CD8-positive, alpha-beta T cell (primary cell): ENCODE measurements at regions of chr5 and their contacts with region 1.

Region 1: DNA sequence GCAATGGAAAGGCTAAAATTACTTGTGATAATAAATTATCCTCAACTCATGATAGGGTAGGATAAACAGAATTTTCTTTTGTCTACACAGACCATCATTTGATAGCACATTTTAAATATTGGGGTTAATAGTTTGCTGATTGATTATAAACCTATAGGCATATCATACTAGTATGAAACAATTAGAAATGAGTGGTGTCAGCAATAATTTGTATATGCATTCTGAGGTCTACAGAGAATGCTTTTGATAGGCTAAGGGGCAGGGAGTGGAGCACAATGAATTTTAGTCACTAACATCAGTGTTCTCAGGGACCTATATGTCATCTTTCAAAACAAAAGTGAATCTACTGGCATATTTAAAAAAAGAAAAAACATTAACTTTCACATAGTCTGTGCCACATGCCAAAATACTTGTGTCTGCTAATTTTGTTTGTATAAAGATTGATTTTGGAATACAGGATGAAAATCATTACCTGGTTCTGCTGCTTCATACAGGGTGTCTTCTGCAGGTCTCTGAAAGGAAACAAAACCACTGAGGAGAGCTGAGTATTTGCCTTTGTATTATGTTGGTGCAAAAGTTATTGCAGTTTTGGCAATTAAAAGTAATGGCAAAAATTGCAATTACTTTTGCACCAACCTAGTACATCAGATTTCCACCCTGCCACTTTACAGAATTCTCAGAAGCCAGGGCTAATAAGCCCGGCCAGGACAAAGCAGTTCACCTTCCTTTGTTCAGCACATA is 27.9 kb upstream of the NADK2 start:
- DNase-seq: no peak
- ATAC-seq: no peak
- H3K4me3 ChIP-seq: no peak overlapping the region
- H3K4me3 Mint-ChIP-seq: no peak overlapping the region
- H3K27ac ChIP-seq: no peak overlapping the region
- H3K27ac Mint-ChIP-seq: no peak overlapping the region
- H3K4me1 ChIP-seq: no peaks in the 10 kb centered on the region
- H3K4me1 Mint-ChIP-seq: no peaks in the 10 kb centered on the region
- H3K27me3 ChIP-seq: no peaks in the 10 kb centered on the region
- H3K27me3 Mint-ChIP-seq: peaks cover 7% of the 10 kb centered on the region
- CTCF ChIP-seq: no peak

Region 2: DNA sequence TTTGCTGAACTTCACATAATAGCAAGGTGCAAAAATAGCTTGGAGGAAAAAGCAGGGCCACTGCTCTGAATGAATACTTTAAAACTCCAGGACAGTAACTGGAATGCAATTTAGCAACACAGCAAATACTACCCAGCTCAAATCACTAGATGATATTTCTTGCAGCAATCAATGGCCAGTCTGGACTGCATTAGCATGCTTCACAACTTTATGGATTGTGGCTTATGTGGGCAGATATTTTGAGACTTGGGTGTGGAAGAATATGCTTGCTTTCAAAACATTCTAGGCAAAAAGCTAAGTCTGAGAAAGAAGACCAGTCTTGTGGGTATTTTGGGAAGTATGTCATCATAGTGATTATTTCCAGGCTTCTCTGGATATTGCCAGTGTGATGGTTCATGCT is 28.9 kb after region 1 on chr5:
- CTCF ChIA-PET with region 1: no interaction called
- POLR2A ChIA-PET with region 1: no interaction called
- intact Hi-C with region 1: no loop called
- DNase-seq: no peak
- ATAC-seq: no peak
- H3K4me3 ChIP-seq: no peak overlapping the region
- H3K4me3 Mint-ChIP-seq: no peak overlapping the region
- H3K27ac ChIP-seq: no peak overlapping the region
- H3K27ac Mint-ChIP-seq: no peak overlapping the region
- H3K4me1 ChIP-seq: no peaks in the 10 kb centered on the region
- H3K4me1 Mint-ChIP-seq: peaks cover 5% of the 10 kb centered on the region
- H3K27me3 ChIP-seq: no peaks in the 10 kb centered on the region
- H3K27me3 Mint-ChIP-seq: peaks cover 23% of the 10 kb centered on the region
- CTCF ChIP-seq: no peak

Region 3: GRCh38 chr5:36690041-36690961 is 420.7 kb after region 1 on chr5:
- CTCF ChIA-PET with region 1: interaction called, 4 read pairs
- POLR2A ChIA-PET with region 1: no interaction called
- intact Hi-C with region 1: loop called (anchors 5 kb)
- DNase-seq: peak; percentile 21 to 73 (median 61)
- ATAC-seq: peak; percentile 91
- H3K4me3 ChIP-seq: peak overlapping the region; percentile 51 to 68
- H3K4me3 Mint-ChIP-seq: peak overlapping the region; percentile 90
- H3K27ac ChIP-seq: peak overlapping the region in 1 of 2 experiments; percentile 19
- H3K27ac Mint-ChIP-seq: no peak overlapping the region
- H3K4me1 ChIP-seq: peaks cover 11% of the 10 kb centered on the region
- H3K4me1 Mint-ChIP-seq: peaks cover 17% of the 10 kb centered on the region
- H3K27me3 ChIP-seq: no peaks in the 10 kb centered on the region
- H3K27me3 Mint-ChIP-seq: peaks cover 28% of the 10 kb centered on the region
- CTCF ChIP-seq: peak; percentile 75

Region 4: GRCh38 chr5:36695677-36696673 is 426.3 kb after region 1 on chr5:
- CTCF ChIA-PET with region 1: interaction called, 4 read pairs
- POLR2A ChIA-PET with region 1: no interaction called
- intact Hi-C with region 1: loop called (anchors 5 kb)
- DNase-seq: peak in 7 of 9 experiments; percentile 3 to 53 (median 32)
- ATAC-seq: peak; percentile 58
- H3K4me3 ChIP-seq: no peak overlapping the region
- H3K4me3 Mint-ChIP-seq: no peak overlapping the region
- H3K27ac ChIP-seq: no peak overlapping the region
- H3K27ac Mint-ChIP-seq: no peak overlapping the region
- H3K4me1 ChIP-seq: no peaks in the 10 kb centered on the region
- H3K4me1 Mint-ChIP-seq: peaks cover 7% of the 10 kb centered on the region
- H3K27me3 ChIP-seq: no peaks in the 10 kb centered on the region
- H3K27me3 Mint-ChIP-seq: peaks cover 18% of the 10 kb centered on the region
- CTCF ChIP-seq: peak; percentile 45